RWPE1 (cell line): ENCODE measurements at regions of chr12 and their contacts with region 1.

Region 1: GRCh38 chr12:122123051-122123760 is 44.6 kb downstream of the MLXIP start:
- DNase-seq: peak; percentile 71
- H3K27ac ChIP-seq: peak overlapping the region; percentile 53
- CTCF ChIP-seq: peak; percentile 80

Region 2: GRCh38 chr12:122054842-122055520 is 68.2 kb before region 1 on chr12:
- CTCF ChIA-PET with region 1: interaction called, 17 read pairs
- POLR2A ChIA-PET with region 1: no interaction called
- DNase-seq: no peak
- H3K27ac ChIP-seq: peak overlapping the region; percentile 56
- CTCF ChIP-seq: no peak

Region 3: GRCh38 chr12:122096591-122097149 is 26.5 kb before region 1 on chr12:
- CTCF ChIA-PET with region 1: interaction called, 11 read pairs
- POLR2A ChIA-PET with region 1: interaction called, 4 read pairs
- DNase-seq: peak; percentile 93
- H3K27ac ChIP-seq: peak overlapping the region; percentile 99
- CTCF ChIP-seq: no peak